ENCODE measurements at regions of chr17 and their contacts with region 1.

Region 1: DNA sequence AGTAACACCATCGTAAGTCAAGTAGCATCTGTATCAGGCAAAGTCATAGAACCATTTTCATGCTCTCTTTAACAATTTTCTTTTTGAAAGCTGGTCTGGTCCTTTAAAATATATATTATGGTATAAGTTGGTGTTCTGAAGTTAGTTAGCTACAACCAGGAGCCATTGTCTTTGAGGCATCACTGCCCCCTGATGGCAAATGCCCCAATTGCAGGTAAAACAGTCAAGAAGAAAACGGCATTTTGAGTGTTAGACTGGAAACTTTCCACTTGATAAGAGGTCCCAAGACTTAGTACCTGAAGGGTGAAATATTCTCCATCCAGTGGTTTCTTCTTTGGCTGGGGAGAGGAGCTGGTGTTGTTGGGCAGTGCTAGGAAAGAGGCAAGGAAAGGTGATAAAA is 14.1 kb downstream of the TP53 start:
- DNase-seq: no peak
- ATAC-seq: no peak
- H3K4me3 ChIP-seq: no peak overlapping the region
- H3K27ac ChIP-seq: no peak overlapping the region
- H3K4me1 ChIP-seq: no peaks in the 10 kb centered on the region
- H3K27me3 ChIP-seq: no peaks in the 10 kb centered on the region
- CTCF ChIP-seq: peak; percentile 33 to 51 (median 38)
- POLR2A ChIP-seq: no peak

Region 2: DNA sequence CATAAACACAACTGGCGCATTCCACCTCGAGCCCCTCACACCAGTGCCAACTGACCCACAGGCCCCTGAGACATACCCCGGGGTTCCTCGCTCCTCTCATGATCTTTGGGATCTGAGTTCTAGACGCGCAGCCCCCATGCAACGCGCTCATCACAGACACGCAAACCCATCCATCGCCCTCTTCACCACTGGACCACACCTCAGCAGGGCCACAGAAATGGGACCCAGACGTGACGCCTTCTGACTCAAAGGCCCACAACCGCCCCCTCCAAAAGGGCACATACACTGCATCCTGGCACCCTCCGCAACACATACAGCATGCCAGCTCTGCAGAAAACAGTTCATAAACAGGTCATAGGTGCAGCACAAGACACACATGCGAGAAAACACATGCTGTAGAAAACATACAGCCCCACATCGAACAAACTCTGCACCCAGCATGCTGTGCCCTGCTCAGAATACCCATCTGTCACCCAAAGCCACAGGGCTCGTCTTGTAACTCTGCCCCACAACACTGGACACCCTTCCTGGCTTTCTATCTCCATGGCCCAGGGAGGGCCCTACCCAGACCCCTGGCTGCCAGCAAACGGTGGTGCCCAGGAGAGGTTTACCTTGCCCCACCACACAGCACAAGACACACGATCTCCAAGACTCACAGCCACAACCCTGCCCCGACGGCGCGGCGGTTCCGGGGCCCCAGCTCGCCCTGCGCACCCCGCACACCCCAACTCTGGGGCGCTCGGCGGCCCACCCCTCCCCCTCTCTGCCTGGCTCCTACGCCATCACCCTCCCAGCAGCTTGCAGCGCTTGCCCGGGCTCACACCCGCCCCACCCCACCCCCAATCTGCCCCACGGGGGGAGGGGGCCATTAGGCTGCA is 194.7 kb before region 1 on chr17:
- intact Hi-C with region 1: no loop called
- DNase-seq: peak in 1 of 3 donors; percentile 57
- ATAC-seq: peak; percentile 12 to 25 (median 20)
- H3K4me3 ChIP-seq: peak overlapping the region; percentile 79 to 85 (median 85)
- H3K27ac ChIP-seq: peak overlapping the region; percentile 96 to 99 (median 98)
- H3K4me1 ChIP-seq: peaks cover 0 to 20% (median 10%) of the 10 kb centered on the region in 4 donors
- H3K27me3 ChIP-seq: no peaks in the 10 kb centered on the region
- CTCF ChIP-seq: no peak
- POLR2A ChIP-seq: no peak

Region 3: DNA sequence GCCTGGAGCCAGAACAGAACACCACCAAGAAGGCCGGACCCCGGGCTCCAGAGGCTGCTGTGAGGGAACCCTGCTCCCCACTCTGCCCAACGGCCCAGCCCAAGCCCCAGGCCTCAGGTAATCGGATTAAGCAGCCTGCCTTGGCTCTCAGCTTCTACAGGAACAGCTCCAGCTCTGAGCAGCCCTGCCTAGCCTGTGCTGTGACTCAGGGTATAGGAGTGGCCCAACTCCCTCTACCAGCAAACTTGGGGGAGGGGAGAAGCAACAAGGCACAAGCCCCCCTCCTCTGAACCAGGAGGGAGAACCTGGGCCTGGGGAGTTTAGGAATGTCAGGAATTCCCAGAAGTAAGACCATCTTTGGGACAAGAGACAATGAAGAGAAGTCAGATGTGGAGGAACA is 82.5 kb before region 1 on chr17:
- intact Hi-C with region 1: loop called in 1 of 2 experiments (anchors 10 kb)
- DNase-seq: no peak
- ATAC-seq: no peak
- H3K4me3 ChIP-seq: no peak overlapping the region
- H3K27ac ChIP-seq: no peak overlapping the region
- H3K4me1 ChIP-seq: no peaks in the 10 kb centered on the region
- H3K27me3 ChIP-seq: no peaks in the 10 kb centered on the region
- CTCF ChIP-seq: no peak
- POLR2A ChIP-seq: no peak

Region 4: DNA sequence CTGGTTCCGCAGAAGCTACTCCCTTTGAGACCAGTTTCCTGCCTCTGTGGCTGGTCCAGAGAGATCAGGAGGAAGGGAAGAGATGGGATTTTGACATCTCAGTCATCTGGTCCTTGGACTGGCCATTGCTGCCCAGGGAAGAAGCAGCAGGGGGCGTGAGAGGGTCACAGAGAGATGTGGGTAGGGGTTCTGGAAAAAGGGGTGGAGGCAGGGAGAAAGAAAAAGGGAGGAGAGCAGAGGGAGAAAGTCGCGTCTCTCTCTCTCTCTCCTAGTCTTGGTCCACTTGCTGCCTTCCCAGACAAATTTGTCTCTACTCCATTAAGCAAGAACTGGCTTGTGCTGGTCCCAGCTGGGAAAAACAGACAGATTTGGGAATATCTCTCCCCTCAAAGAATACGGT is 38.9 kb before region 1 on chr17:
- intact Hi-C with region 1: no loop called
- DNase-seq: peak in 1 of 3 donors; percentile 53
- ATAC-seq: peak in 1 of 4 donors; percentile 9
- H3K4me3 ChIP-seq: no peak overlapping the region
- H3K27ac ChIP-seq: no peak overlapping the region
- H3K4me1 ChIP-seq: peaks cover 0 to 41% (median 16%) of the 10 kb centered on the region in 4 donors
- H3K27me3 ChIP-seq: no peaks in the 10 kb centered on the region
- CTCF ChIP-seq: peak; percentile 20 to 48 (median 43)
- POLR2A ChIP-seq: no peak

Measured in right lobe of liver (tissue), 6 donors.